ENCODE measurements at regions of chr17 and their contacts with region 1.

Region 1: GRCh38 chr17:4833178-4833940 is at the start of gene MINK1:
- DNase-seq: peak; percentile 75 to 98 (median 88)
- ATAC-seq: peak; percentile 93
- H3K4me3 ChIP-seq: peak within 1 kb of the TSS; percentile 75 to 77
- H3K4me3 Mint-ChIP-seq: peak within 1 kb of the TSS; percentile 91
- H3K27ac ChIP-seq: peak within 1 kb of the TSS; percentile 73 to 80
- H3K27ac Mint-ChIP-seq: peak within 1 kb of the TSS; percentile 90
- H3K4me1 ChIP-seq: peaks cover 26% of the 10 kb centered on the region
- H3K4me1 Mint-ChIP-seq: peaks cover 39% of the 10 kb centered on the region
- H3K27me3 ChIP-seq: no peaks in the 10 kb centered on the region
- H3K27me3 Mint-ChIP-seq: peaks cover 6% of the 10 kb centered on the region
- CTCF ChIP-seq: no peak
- total RNA-seq, gene MINK1: 85.9 to 86.0 TPM

Region 2: DNA sequence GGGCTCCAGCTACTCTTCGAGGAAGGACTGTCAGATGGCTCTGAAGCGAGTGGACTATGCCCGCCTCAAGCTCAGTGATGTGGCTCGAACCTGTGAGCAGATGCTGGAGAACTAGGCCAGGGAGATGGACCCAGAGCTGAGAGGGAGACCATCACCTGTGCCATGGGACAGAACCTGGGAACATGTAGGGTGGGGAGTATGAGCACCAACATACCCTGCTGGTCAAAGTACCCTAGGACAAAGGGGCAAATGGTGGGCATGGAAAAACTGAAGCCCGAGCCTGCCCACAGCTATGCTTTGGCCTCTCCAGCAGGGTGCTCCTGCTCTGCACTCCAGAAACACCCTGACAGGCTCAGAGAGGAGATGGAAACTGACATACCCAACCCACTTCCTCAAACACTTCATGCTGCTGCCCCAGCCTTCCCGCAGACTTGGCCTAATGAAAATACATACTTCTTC is 100.3 kb before region 1 on chr17:
- CTCF ChIA-PET with region 1: interaction called, 4 read pairs
- POLR2A ChIA-PET with region 1: no interaction called
- intact Hi-C with region 1: loop called in 1 of 2 experiments (anchors 1 kb)
- DNase-seq: peak in 1 of 9 experiments; percentile 45
- ATAC-seq: no peak
- H3K4me3 ChIP-seq: no peak overlapping the region
- H3K4me3 Mint-ChIP-seq: peak overlapping the region; percentile 39
- H3K27ac ChIP-seq: no peak overlapping the region
- H3K27ac Mint-ChIP-seq: no peak overlapping the region
- H3K4me1 ChIP-seq: peaks cover 24% of the 10 kb centered on the region
- H3K4me1 Mint-ChIP-seq: peaks cover 30% of the 10 kb centered on the region
- H3K27me3 ChIP-seq: no peaks in the 10 kb centered on the region
- H3K27me3 Mint-ChIP-seq: no peaks in the 10 kb centered on the region
- CTCF ChIP-seq: no peak

Region 3: GRCh38 chr17:4796553-4796921 is 36.8 kb before region 1 on chr17:
- CTCF ChIA-PET with region 1: no interaction called
- POLR2A ChIA-PET with region 1: interaction called, 5 read pairs
- intact Hi-C with region 1: loop called in 1 of 2 experiments (anchors 2 kb)
- DNase-seq: peak in 2 of 9 experiments; percentile 20 to 28
- ATAC-seq: no peak
- H3K4me3 ChIP-seq: peak overlapping the region; percentile 70 to 73
- H3K4me3 Mint-ChIP-seq: peak overlapping the region; percentile 99
- H3K27ac ChIP-seq: peak overlapping the region; percentile 53 to 67
- H3K27ac Mint-ChIP-seq: peak overlapping the region; percentile 97
- H3K4me1 ChIP-seq: peaks cover 7% of the 10 kb centered on the region
- H3K4me1 Mint-ChIP-seq: peaks cover 13% of the 10 kb centered on the region
- H3K27me3 ChIP-seq: no peaks in the 10 kb centered on the region
- H3K27me3 Mint-ChIP-seq: peaks cover 2% of the 10 kb centered on the region
- CTCF ChIP-seq: no peak

Region 4: DNA sequence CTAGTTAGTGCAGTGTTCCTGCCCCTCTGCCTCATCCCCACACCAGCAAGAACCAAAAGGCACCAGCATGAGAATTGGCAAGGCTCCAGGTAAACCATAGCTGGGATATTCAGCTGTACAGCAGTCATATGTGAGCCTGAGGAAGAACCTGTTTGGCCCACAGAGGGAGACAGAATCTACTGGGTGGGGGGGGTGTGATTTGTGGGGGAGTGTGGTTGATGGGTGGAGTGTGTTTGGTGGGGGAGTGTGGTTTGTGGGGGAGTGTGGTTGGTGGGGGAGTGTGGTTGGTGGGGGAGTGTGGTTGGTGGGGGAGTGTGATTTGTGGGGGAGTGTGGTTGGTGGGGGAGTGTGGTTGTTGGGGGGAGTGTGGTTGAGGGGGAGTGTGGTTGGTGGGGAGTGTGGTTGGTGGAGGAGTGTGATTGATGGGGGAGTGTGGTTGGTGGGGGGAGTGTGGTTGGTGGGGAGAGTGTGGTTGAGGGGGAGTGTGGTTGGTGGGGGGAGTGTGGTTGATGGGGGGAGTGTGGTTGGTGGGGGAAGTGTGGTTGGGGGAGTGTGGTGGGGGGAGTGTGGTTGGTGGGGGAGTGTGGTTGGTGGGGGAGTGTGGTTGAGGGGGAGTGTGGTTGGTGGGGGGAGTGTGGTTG is 19.3 kb after region 1 on chr17:
- CTCF ChIA-PET with region 1: interaction called, 3 read pairs
- POLR2A ChIA-PET with region 1: no interaction called
- intact Hi-C with region 1: loop called in 1 of 2 experiments (anchors 2 kb)
- DNase-seq: peak in 4 of 9 experiments; percentile 12 to 82 (median 57)
- ATAC-seq: peak; percentile 63
- H3K4me3 ChIP-seq: no peak overlapping the region
- H3K4me3 Mint-ChIP-seq: no peak overlapping the region
- H3K27ac ChIP-seq: peak overlapping the region in 1 of 2 experiments; percentile 50
- H3K27ac Mint-ChIP-seq: no peak overlapping the region
- H3K4me1 ChIP-seq: peaks cover 15% of the 10 kb centered on the region
- H3K4me1 Mint-ChIP-seq: peaks cover 33% of the 10 kb centered on the region
- H3K27me3 ChIP-seq: no peaks in the 10 kb centered on the region
- H3K27me3 Mint-ChIP-seq: no peaks in the 10 kb centered on the region
- CTCF ChIP-seq: no peak

Region 5: GRCh38 chr17:4881761-4882555 is 48.6 kb after region 1 on chr17:
- CTCF ChIA-PET with region 1: no interaction called
- POLR2A ChIA-PET with region 1: no interaction called
- intact Hi-C with region 1: loop called in 1 of 2 experiments (anchors 1 kb)
- DNase-seq: peak; percentile 43 to 83 (median 72)
- ATAC-seq: peak; percentile 98
- H3K4me3 ChIP-seq: no peak overlapping the region
- H3K4me3 Mint-ChIP-seq: no peak overlapping the region
- H3K27ac ChIP-seq: no peak overlapping the region
- H3K27ac Mint-ChIP-seq: no peak overlapping the region
- H3K4me1 ChIP-seq: no peaks in the 10 kb centered on the region
- H3K4me1 Mint-ChIP-seq: peaks cover 3% of the 10 kb centered on the region
- H3K27me3 ChIP-seq: no peaks in the 10 kb centered on the region
- H3K27me3 Mint-ChIP-seq: no peaks in the 10 kb centered on the region
- CTCF ChIP-seq: peak; percentile 79

Region 6: DNA sequence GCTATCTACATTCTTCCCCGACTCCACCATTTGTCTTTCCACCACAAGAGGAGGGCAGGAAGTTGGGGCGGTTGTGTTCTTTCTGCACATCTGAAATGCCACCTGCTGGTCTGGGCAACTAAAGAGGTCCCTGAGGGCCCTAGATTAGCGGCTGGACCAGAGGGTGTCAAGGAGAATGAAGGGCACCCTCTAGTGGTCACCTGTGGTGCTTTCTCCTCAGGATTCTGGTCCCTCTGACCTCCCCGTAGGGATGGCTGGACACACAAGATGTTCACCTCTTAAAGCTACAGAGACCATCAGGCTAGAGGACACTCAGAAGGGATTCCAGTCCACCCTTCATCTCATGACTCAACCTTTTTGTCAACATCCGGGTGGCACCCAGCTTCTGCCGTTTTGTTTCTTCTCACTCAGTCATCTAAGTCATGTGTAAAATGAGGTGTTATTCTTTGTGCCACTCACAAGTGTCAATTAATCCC is 404.2 kb after region 1 on chr17:
- CTCF ChIA-PET with region 1: no interaction called
- POLR2A ChIA-PET with region 1: no interaction called
- intact Hi-C with region 1: no loop called
- DNase-seq: peak in 7 of 9 experiments; percentile 31 to 77 (median 45)
- ATAC-seq: peak; percentile 44
- H3K4me3 ChIP-seq: no peak overlapping the region
- H3K4me3 Mint-ChIP-seq: no peak overlapping the region
- H3K27ac ChIP-seq: peak overlapping the region; percentile 1 to 78
- H3K27ac Mint-ChIP-seq: peak overlapping the region; percentile 74
- H3K4me1 ChIP-seq: peaks cover 32% of the 10 kb centered on the region
- H3K4me1 Mint-ChIP-seq: peaks cover 53% of the 10 kb centered on the region
- H3K27me3 ChIP-seq: no peaks in the 10 kb centered on the region
- H3K27me3 Mint-ChIP-seq: no peaks in the 10 kb centered on the region
- CTCF ChIP-seq: peak; percentile 35